ENCODE measurements at regions of chr17 and their contacts with region 1.

Region 1: DNA sequence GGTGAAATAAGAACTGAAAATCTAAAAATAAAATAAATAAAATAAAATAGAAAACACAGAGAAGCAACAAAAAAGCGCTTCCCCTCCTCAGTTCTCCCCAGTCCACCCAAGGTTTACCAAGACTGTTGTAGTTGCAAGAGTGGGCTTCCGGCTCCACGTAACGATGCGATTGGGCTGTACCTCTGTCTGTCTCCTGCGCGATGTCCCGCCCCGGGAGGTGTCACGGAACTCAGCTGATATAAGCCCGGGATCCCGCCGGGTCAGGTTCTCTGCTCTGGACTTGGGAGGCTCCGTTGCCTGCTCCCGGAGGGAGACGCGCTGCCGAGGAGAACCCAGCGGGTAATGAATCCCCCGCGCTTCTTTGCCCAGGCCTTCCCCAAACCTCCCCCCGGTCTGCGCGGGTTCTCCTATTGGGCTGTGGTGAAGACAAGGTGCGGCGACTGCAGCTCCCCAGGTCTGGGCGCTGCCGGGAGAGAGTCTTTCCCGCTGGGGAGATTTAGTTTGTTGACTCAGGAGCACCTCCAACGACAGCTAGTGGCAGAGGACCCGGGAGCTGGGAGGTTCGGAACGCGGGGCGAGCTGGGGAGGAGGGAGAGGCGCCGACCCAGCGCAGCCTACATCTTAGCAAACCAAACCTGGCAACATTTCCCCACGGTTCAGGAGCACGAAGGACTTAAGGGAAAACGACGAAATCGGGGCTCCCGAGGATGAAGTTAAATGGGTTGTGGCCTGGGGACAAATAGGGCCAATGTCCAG is at the start of gene SLFN5:
- DNase-seq: peak; percentile 90
- H3K4me3 Mint-ChIP-seq: peak within 1 kb of the TSS; percentile 96
- H3K27ac Mint-ChIP-seq: peak within 1 kb of the TSS; percentile 96
- H3K4me1 Mint-ChIP-seq: peaks cover 77% of the 10 kb centered on the region
- H3K27me3 Mint-ChIP-seq: no peaks in the 10 kb centered on the region
- total RNA-seq, gene SLFN5: 10.4 and 11.0 TPM in 2 replicates

Region 2: GRCh38 chr17:34009912-34010311 is 1233.1 kb before region 1 on chr17:
- intact Hi-C with region 1: no loop called
- DNase-seq: no peak
- H3K4me3 Mint-ChIP-seq: no peak overlapping the region
- H3K27ac Mint-ChIP-seq: no peak overlapping the region
- H3K4me1 Mint-ChIP-seq: no peaks in the 10 kb centered on the region
- H3K27me3 Mint-ChIP-seq: no peaks in the 10 kb centered on the region

Region 3: DNA sequence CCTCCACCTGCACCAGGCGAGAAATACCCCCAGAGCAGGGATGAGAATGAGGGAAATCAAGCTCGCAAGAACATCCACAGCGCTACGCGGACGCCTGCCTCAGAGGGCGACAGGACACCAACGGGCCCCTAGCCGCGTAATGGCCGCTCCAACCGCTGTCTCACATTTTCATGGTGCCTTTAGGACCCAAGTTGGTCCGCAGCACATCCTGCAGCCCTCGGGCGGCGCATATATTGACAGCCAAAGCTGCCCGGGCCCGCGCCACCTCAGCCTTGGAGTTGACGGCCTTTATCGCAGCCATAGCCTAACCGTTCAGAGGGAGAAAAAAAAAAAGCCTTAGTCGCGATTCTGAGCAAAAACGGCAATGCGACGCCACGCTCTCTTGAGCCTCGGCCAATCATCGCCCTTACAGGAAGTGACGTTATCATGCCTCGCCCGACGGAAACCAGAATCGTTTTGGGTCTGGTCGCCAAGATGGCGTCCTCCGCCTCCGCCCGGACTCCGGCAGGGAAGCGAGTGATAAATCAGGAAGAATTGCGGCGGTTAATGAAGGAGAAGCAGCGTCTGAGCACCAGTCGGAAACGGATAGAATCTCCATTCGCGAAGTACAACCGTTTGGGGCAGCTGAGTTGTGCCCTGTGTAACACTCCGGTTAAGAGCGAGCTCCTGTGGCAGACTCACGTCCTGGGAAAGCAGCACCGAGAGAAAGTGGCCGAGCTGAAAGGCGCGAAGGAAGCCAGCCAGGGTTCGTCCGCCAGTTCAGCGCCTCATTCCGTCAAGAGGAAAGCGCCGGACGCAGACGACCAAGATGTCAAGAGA is 281.7 kb before region 1 on chr17 and contains the starts of genes CCT6B and ZNF830:
- intact Hi-C with region 1: loop called (anchors 2 kb)
- DNase-seq: peak; percentile 88
- H3K4me3 Mint-ChIP-seq: peak within 1 kb of the TSS; percentile 100
- H3K27ac Mint-ChIP-seq: peak within 1 kb of the TSS; percentile 100
- H3K4me1 Mint-ChIP-seq: peaks cover 23% of the 10 kb centered on the region
- H3K27me3 Mint-ChIP-seq: no peaks in the 10 kb centered on the region
- total RNA-seq, gene CCT6B: 0.96 and 1.0 TPM in 2 replicates
- total RNA-seq, gene ZNF830: 28.0 and 29.7 TPM in 2 replicates

Region 4: GRCh38 chr17:35170968-35171771 is 71.8 kb before region 1 on chr17:
- intact Hi-C with region 1: loop called (anchors 1 kb)
- DNase-seq: peak; percentile 15
- H3K4me3 Mint-ChIP-seq: peak overlapping the region; percentile 5
- H3K27ac Mint-ChIP-seq: no peak overlapping the region
- H3K4me1 Mint-ChIP-seq: peaks cover 35% of the 10 kb centered on the region
- H3K27me3 Mint-ChIP-seq: peaks cover 7% of the 10 kb centered on the region

Region 5: DNA sequence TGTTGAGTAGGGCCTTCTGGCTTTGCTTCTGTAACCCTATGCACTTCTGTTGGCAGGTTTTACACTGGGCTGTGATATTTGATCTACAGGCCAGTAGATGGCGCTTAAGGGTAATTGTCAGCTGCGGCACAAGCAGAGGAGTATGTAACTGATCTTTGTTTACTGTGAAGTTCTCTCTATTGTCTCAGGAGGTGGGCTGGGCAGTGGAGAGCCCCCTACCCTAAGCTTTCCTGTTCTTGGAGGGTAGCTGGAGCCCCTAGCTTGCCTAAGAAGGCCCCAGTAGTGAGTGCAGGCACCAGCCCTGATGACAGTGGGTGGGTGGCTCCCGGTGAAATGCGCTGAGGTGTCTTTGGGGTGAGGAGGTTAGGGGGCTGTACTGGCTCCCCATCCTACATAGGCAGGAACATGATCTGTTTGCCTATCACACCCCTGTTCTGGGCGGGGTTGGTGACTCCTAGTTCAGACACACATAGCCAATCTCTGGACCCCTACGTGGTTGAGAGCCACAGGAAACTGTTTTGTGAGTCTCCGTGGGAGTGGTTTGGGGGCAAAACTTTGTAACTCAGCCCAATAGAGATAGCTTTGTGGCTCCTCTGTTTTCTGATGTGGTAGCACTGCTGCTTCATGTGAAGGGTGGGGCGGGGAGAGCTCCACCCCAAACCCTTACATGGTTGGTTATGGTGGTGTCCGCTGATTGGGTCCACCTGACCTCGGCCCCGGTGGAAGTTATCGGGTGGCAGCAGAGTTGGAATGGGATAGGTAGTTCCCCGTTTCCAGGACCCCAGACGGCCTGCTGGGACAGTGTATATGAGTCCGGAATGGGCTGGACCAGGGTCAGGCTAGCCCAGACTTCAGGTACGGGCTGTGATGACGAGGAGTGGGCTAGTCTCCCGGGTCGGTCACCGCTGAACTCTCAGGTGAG is 70.1 kb after region 1 on chr17:
- intact Hi-C with region 1: loop called (anchors 1 kb)
- DNase-seq: peak; percentile 78
- H3K4me3 Mint-ChIP-seq: peak overlapping the region; percentile 81
- H3K27ac Mint-ChIP-seq: peak overlapping the region; percentile 88
- H3K4me1 Mint-ChIP-seq: peaks cover 45% of the 10 kb centered on the region
- H3K27me3 Mint-ChIP-seq: peaks cover 2% of the 10 kb centered on the region

Region 6: DNA sequence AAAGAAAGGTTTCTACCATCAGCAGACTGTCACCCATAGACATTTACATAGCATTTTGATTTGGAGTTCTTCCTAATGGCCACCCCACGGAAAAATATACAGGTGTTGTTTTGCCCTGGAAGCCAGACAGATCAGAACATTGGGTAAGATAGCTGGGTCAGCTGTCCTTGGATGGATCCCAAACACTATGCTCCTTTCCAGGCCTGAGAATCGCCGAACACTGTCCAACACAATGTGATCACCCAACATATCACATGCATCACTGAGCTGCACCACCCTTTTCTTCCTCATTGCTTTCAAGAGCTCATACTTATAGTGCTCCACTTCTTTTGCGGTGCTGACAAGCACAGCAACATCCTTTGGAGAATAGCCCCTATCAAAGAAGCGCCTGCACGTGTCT is 109.3 kb after region 1 on chr17:
- intact Hi-C with region 1: no loop called
- DNase-seq: no peak
- H3K4me3 Mint-ChIP-seq: no peak overlapping the region
- H3K27ac Mint-ChIP-seq: no peak overlapping the region
- H3K4me1 Mint-ChIP-seq: peaks cover 26% of the 10 kb centered on the region
- H3K27me3 Mint-ChIP-seq: no peaks in the 10 kb centered on the region

Region 7: GRCh38 chr17:35432176-35433074 is 189.4 kb after region 1 on chr17 and contains the start of gene SLFN12:
- intact Hi-C with region 1: loop called (anchors 2 kb)
- DNase-seq: peak; percentile 36
- H3K4me3 Mint-ChIP-seq: peak within 1 kb of the TSS; percentile 86
- H3K27ac Mint-ChIP-seq: peak within 1 kb of the TSS; percentile 87
- H3K4me1 Mint-ChIP-seq: peaks cover 51% of the 10 kb centered on the region
- H3K27me3 Mint-ChIP-seq: no peaks in the 10 kb centered on the region
- total RNA-seq, gene SLFN12: 6.6 and 8.4 TPM in 2 replicates

Region 8: DNA sequence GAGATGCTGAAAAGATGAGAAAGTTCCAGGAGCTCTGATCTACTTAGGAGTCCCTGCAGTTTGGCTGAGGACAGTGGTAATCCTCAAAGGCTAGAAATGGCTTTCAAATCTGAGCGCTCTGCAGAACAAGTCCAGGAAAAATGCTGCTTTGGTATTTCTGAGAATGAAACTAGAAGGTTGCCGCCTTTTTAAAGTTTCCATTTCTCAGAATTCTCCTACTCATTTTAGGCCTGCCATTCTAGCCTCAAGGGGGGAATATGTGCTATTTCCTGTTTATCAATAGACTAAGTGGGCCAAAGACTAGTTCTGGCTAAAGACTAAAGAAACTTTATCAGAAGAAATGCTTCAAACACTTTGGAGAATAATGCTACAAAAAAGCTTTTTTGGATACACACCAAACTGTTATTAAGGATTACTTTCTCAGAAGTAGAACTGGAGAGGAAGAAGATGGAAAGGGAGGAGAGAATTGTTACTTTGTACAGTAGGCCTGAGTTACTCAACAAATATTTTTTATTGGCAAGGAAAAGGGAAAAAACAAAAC is 294.7 kb after region 1 on chr17 and contains the start of gene SLFN12L:
- intact Hi-C with region 1: loop called (anchors 1 kb)
- DNase-seq: peak; percentile 61
- H3K4me3 Mint-ChIP-seq: peak within 1 kb of the TSS; percentile 85
- H3K27ac Mint-ChIP-seq: peak within 1 kb of the TSS; percentile 100
- H3K4me1 Mint-ChIP-seq: peaks cover 54% of the 10 kb centered on the region
- H3K27me3 Mint-ChIP-seq: no peaks in the 10 kb centered on the region
- total RNA-seq, gene SLFN12L: 45.2 and 49.3 TPM in 2 replicates

Region 9: DNA sequence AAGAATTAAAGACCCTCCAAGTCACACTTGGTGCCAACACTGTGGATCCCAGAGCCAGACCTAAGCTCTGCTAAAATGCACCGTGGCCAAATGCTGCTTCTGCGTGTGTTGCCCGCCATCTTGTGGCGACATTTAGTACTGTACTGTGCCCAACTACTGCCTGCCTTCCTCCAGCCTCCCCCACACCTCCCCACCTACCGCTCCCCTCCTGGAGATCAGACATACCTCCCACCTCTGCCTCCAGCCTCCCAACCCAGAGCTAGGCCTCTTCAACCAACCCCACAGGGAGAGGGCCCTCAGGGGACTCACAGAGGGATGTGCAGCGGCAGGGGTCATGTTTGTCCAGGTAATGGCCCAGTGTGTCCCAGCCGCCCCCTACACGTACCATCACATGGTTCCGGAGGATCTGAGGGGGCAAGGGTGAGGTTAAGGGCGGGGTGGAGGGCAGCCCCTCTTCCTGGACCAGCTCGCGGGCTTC is 504.6 kb after region 1 on chr17:
- intact Hi-C with region 1: loop called (anchors 10 kb)
- DNase-seq: peak; percentile 64
- H3K4me3 Mint-ChIP-seq: no peak overlapping the region
- H3K27ac Mint-ChIP-seq: no peak overlapping the region
- H3K4me1 Mint-ChIP-seq: peaks cover 13% of the 10 kb centered on the region
- H3K27me3 Mint-ChIP-seq: peaks cover 37% of the 10 kb centered on the region